A549 (cell line): ENCODE measurements at regions of chr7 and their contacts with region 1.

Region 1: GRCh38 chr7:140003913-140004382 is 58.8 kb downstream of the PARP12 start:
- DNase-seq: peak; percentile 63 to 80
- ATAC-seq: peak; percentile 64 to 74; a peak in 5 of 6 replicates
- H3K4me3 ChIP-seq: no peak overlapping the region
- H3K27ac ChIP-seq: no peak overlapping the region
- H3K4me1 ChIP-seq: no peaks in the 10 kb centered on the region
- CTCF ChIP-seq: peak; percentile 79
- EP300 ChIP-seq: no peak
- POLR2A ChIP-seq: no peak
- RAD21 ChIP-seq: peak; percentile 84 to 86

Region 2: DNA sequence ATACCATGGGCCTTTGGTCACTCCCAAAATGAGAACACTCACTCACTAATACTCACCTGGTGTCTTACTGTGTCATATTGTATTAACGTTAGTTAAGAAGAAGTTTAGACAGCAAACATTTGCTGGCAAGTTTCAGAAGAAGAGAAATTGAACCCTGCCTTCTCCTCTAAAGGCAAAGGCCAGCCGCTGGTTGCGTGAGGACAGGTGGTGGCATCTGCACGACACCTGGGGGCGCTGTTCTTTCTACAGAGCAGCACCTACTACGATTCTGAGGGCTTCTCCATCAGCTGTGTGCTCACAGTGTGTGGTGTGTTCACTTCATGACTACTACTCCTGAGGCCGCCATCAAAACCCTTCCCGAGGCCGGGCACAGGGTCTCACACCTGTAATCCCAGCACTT is 498.4 kb before region 1 on chr7:
- CTCF ChIA-PET with region 1: interaction called, 45 read pairs
- POLR2A ChIA-PET with region 1: no interaction called
- DNase-seq: peak in 1 of 2 experiments; percentile 44
- ATAC-seq: peak; percentile 54 to 82; a peak in 4 of 6 replicates
- H3K4me3 ChIP-seq: no peak overlapping the region
- H3K27ac ChIP-seq: no peak overlapping the region
- H3K4me1 ChIP-seq: no peaks in the 10 kb centered on the region
- CTCF ChIP-seq: peak; percentile 23; the same call in 2 of the 3 replicates
- EP300 ChIP-seq: no peak
- POLR2A ChIP-seq: no peak
- RAD21 ChIP-seq: 0 out of 5 replicates have a peak, but pooled peaks of 1 of the 2 experiments have one; percentile 11

Region 3: DNA sequence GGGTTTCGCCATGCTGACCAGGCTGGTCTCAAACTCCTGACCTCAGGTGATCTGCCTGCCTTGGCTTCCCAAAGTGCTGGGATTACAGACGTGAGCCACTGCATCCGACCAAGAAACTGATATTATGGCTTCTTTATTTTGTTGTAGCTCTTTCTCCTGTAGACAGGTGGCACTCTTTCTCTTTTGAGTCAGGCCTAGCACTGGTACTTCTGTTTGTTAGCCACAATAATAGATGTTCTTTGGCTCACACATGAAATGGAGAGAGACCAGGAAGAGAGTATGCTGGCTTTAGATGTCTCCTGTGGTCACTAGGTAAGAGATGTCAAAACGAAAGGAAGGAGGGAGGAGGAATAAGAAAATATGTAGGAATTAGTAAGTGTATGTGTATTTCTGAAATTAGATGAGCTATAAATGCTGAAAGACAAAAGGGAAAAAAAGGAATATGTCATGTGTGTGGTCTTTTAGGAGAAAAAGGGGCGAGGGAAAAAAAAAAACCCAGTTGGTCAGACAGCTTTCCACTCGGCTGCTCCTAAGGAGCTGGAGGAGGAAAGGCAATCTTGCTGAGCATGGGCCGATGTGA is 401.7 kb before region 1 on chr7:
- CTCF ChIA-PET with region 1: interaction called, 72 read pairs
- POLR2A ChIA-PET with region 1: no interaction called
- DNase-seq: peak; percentile 45 to 56
- ATAC-seq: peak; percentile 86 to 94; a peak in 5 of 6 replicates
- H3K4me3 ChIP-seq: no peak overlapping the region
- H3K27ac ChIP-seq: no peak overlapping the region
- H3K4me1 ChIP-seq: no peaks in the 10 kb centered on the region
- CTCF ChIP-seq: peak; percentile 69
- EP300 ChIP-seq: no peak
- POLR2A ChIP-seq: no peak
- RAD21 ChIP-seq: peak; percentile 59 to 68; a peak in 4 of 5 replicates

Region 4: GRCh38 chr7:139645572-139646523 is 358.1 kb before region 1 on chr7:
- CTCF ChIA-PET with region 1: interaction called, 311 read pairs
- POLR2A ChIA-PET with region 1: no interaction called
- DNase-seq: peak; percentile 62 to 84
- ATAC-seq: peak; percentile 83 to 84; a peak in 5 of 6 replicates
- H3K4me3 ChIP-seq: no peak overlapping the region
- H3K27ac ChIP-seq: peak overlapping the region; percentile 63 to 74; a peak in 5 of 6 replicates
- H3K4me1 ChIP-seq: peaks cover 43% of the 10 kb centered on the region
- CTCF ChIP-seq: peak; percentile 92
- EP300 ChIP-seq: no peak
- POLR2A ChIP-seq: no peak
- RAD21 ChIP-seq: peak; percentile 96

Region 5: DNA sequence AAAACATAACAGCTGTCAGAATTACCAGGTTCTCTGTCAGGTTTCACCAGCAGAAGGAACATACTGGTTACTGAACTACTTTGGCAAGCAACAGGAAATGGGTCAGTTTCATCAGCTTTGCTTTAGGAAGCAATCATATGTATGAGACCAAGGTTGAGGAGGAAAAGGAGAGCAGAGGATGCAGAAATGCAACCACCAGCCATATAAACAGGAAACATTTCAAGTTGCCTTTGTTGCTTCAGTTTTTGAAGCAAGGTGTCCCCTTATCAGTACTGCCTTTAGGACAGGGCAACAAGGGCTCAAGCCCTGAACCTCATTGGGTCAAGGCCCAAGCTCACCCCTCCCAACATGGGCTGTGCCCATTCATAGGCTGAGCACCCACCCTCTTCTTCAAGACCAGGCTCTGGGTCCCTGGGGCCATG is 236.4 kb before region 1 on chr7:
- CTCF ChIA-PET with region 1: interaction called, 10 read pairs
- POLR2A ChIA-PET with region 1: no interaction called
- DNase-seq: no peak
- ATAC-seq: no peak
- H3K4me3 ChIP-seq: no peak overlapping the region
- H3K27ac ChIP-seq: peak overlapping the region in 1 of 2 experiments; percentile 6; a peak in 1 of 6 replicates
- H3K4me1 ChIP-seq: peaks cover 32% of the 10 kb centered on the region
- CTCF ChIP-seq: no peak
- EP300 ChIP-seq: no peak
- POLR2A ChIP-seq: no peak
- RAD21 ChIP-seq: no peak

Region 6: DNA sequence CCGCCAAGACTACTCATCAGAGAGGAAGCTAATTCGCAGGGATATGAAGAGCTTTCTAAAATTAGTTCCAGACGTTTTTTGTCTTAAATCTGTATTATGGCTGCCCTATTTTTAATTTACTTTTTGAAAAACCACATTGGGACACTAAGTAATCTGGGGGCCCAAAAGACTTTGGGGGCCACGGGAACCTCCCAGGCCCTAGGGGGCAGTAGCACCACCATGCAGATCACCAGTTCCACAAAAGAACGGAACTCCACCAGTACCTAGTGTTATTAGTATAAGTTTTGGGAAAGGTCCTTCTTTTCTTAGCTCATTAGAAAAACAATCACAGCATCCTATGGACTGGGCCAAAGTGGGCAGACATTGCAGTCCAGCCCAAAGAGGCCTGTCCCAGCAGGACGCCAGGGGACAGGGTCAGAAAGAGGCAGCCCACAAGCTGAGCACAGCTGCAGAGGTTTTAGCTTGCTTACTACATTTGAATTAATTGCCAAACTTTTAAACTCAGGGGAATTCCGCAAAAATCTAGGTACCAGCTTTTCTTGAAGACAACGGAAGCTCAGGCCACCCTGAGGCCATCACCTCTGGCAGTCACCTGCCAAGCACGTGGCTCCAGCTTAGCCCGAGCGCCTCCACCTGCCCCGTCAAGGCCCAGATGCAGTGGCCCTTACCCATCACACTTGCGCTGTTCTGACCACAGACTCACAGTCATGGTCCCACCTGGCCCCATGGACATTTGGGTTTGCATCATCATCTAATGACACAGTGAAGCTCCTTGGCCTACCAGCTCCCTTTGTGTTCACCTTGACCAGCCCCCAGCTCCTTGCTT is 16.0 kb before region 1 on chr7:
- CTCF ChIA-PET with region 1: interaction called, 32 read pairs
- POLR2A ChIA-PET with region 1: no interaction called
- DNase-seq: no peak
- ATAC-seq: no peak
- H3K4me3 ChIP-seq: no peak overlapping the region
- H3K27ac ChIP-seq: no peak overlapping the region
- H3K4me1 ChIP-seq: peaks cover 9% of the 10 kb centered on the region
- CTCF ChIP-seq: no peak; the same call in 2 of the 3 replicates
- EP300 ChIP-seq: no peak
- POLR2A ChIP-seq: no peak
- RAD21 ChIP-seq: no peak